ENCODE measurements at regions of chr14 and their contacts with region 1.

Region 1: GRCh38 chr14:73825551-73826188 is 26.0 kb upstream of the PTGR2 start:
- DNase-seq: peak; percentile 89 to 92
- ATAC-seq: peak; percentile 91 to 97 (median 96)
- H3K4me3 ChIP-seq: peak overlapping the region in 1 of 10 donors; percentile 6
- H3K27ac ChIP-seq: peak overlapping the region in 4 of 10 donors; percentile 2 to 35 (median 8)
- H3K4me1 ChIP-seq: peaks cover 0 to 20% (median 13%) of the 10 kb centered on the region in 9 donors
- H3K27me3 ChIP-seq: no peaks in the 10 kb centered on the region
- CTCF ChIP-seq: peak; percentile 88 to 97 (median 95)

Region 2: GRCh38 chr14:73644531-73645247 is 181.0 kb before region 1 on chr14 and contains the start of gene DNAL1:
- intact Hi-C with region 1: loop called in 1 of 10 experiments (anchors 10 kb)
- DNase-seq: peak; percentile 94 to 96
- ATAC-seq: peak; percentile 99 to 100 (median 100)
- H3K4me3 ChIP-seq: peak within 1 kb of the TSS; percentile 63 to 94 (median 78)
- H3K27ac ChIP-seq: peak within 1 kb of the TSS; percentile 75 to 95 (median 87)
- H3K4me1 ChIP-seq: peaks cover 4 to 18% (median 16%) of the 10 kb centered on the region in 9 donors
- H3K27me3 ChIP-seq: no peaks in the 10 kb centered on the region
- CTCF ChIP-seq: no peak
- total RNA-seq, gene DNAL1: 11.6 to 21.2 (median 14.0) TPM

Region 3: DNA sequence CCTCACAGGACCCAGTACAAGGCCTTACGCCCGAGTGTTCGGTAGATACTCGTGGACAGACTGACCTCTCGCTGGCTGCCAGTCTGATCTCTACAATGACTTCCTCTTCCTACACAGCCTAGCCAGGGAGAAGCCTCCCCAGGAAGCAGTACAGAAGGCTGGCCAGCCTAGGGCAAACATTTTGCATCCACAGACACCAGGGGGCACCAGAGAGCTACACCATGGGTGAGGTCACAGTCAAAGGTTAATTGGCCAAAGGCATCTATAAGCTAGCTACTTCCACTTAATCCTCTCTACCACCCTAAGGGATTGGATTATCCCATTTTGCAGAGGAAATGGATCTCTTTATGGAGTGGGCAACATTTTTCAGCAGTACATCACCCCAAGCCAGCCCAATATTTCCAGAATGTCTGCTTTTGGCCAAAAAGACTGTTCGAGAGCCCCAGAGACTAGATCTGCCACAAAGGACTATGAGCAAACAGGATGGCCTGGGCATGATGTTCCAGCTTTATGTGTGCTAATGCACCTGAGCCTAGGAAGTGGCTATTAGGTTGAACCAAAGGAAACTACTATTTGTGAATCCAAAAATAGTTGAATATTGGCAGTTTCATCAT is 96.8 kb before region 1 on chr14:
- intact Hi-C with region 1: loop called (anchors 1 to 5 kb)
- DNase-seq: peak; percentile 86 to 90
- ATAC-seq: peak; percentile 65 to 79 (median 73)
- H3K4me3 ChIP-seq: peak overlapping the region in 1 of 10 donors; percentile 8
- H3K27ac ChIP-seq: peak overlapping the region in 9 of 10 donors; percentile 5 to 91 (median 59)
- H3K4me1 ChIP-seq: peaks cover 32 to 77% (median 69%) of the 10 kb centered on the region in 9 donors
- H3K27me3 ChIP-seq: no peaks in the 10 kb centered on the region
- CTCF ChIP-seq: peak; percentile 93 to 97 (median 97)

Region 4: DNA sequence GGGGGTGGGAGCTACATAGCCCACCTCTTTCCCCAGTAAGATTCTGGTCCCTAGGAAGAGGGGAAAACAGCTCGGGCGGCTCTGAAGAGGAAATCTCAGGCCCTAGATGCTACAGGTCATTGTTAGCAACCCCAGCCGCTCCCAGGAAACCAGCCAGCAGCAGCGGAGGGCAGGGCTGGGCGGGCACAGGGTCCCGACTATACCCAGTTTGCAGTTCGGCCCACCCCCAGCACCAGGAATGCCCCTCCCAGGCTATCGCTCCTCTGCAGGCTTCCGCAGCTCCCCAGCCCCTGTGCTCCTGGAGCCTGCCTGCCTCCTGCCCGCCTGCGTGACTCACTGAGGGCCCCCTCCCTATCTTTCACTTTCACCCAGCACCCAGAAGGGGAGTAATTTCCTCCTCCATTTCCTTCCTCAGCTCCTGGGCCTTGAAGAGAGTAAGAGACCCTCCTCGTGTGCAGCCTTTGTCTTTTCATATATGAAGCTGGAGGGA is 84.2 kb before region 1 on chr14:
- intact Hi-C with region 1: loop called in 1 of 10 experiments (anchors 5 kb)
- DNase-seq: peak; percentile 81 to 84
- ATAC-seq: peak; percentile 75 to 90 (median 81)
- H3K4me3 ChIP-seq: peak overlapping the region in 8 of 10 donors; percentile 11 to 44 (median 36)
- H3K27ac ChIP-seq: peak overlapping the region; percentile 26 to 89 (median 85)
- H3K4me1 ChIP-seq: peaks cover 75 to 86% (median 81%) of the 10 kb centered on the region in 9 donors
- H3K27me3 ChIP-seq: no peaks in the 10 kb centered on the region
- CTCF ChIP-seq: peak in 1 of 9 donors; percentile 9

Region 5: DNA sequence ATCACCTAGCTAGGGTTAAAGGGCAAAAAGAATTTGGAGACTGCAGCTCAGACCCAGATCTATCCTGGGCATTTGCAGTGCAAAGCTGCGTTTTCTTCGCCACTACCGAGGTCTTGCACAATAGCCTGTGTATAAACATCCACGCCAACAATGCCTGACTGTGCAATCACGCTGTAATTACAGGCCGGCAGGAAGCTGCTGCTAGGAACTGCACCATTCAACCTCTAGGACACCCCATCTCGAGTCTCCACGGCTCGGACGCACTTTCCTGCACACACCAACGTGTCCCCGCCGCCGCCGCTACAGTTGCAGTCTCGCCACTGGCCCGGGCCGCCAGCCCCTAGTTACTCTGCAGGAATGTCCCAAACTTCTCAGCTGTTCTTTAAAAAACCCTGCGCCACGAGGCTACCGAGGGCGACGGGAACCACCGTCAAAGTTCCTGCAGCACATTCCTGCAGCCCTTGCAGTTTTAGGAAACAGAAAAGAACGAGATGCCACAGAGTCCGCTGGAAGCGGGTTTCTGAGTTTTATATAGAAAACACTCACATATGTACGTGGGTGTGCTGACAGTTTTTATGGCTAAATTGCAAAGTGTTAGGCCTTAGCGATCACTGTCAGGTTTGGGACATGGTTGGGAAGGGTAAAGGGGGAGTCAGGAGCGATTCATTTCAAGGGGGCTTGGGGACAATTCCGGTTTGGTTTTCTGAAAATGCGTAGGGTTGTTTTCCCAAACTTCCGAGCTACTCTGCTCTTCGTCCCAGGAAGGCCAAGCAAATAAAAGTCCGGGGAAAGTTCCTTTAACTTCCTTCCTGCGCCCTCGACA is 39.6 kb before region 1 on chr14:
- intact Hi-C with region 1: loop called in 3 of 10 experiments (anchors 5 kb)
- DNase-seq: peak; percentile 65 to 73
- ATAC-seq: peak; percentile 67 to 78 (median 74)
- H3K4me3 ChIP-seq: peak overlapping the region; percentile 48 to 98 (median 76)
- H3K27ac ChIP-seq: peak overlapping the region; percentile 97 to 100 (median 98)
- H3K4me1 ChIP-seq: peaks cover 44 to 89% (median 77%) of the 10 kb centered on the region in 9 donors
- H3K27me3 ChIP-seq: no peaks in the 10 kb centered on the region
- CTCF ChIP-seq: peak in 4 of 9 donors; percentile 13 to 38 (median 26)

Measured in heart right ventricle (tissue), 16 donors.